ENCODE measurements at regions of chr7 and their contacts with region 1.

Region 1: GRCh38 chr7:3897438-3898385 is 596.7 kb downstream of the SDK1 start:
- DNase-seq: no peak
- ATAC-seq: peak in 1 of 2 donors; percentile 43
- H3K4me3 ChIP-seq: no peak overlapping the region
- H3K27ac ChIP-seq: no peak overlapping the region
- H3K4me1 ChIP-seq: no peaks in the 10 kb centered on the region
- H3K27me3 ChIP-seq: no peaks in the 10 kb centered on the region

Region 2: DNA sequence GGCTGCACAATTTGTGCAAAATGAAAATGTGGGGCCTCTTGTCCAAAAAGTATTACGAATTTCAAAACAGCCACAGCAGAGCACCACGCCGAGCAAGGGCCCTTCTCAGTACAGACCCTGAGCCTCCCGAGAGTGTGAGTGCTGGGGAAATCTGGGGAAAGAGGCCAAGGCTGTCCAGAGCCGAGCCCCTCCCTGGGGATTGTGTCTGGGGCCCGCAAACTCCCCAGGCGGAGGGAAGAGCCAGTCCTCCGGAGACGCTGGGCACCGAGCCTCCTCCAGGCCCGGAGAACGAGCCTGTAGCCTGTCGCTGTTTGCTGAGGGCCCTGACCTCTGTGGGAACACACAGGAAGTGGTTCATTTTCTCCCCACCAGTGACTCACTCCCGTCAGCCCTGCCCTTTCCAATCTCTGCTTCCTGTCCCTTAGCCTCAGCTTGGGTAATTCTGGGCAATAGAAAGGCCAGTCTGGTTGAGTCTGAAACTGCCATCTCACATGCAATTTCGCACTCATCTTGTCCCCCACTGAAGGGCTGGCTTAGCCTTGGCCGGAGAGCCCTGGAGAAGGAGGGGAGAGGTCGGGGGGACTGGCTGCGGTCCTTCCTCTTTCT is 1034.1 kb before region 1 on chr7:
- intact Hi-C with region 1: loop called in 1 of 4 experiments (anchors 10 kb)
- DNase-seq: peak; percentile 91 to 93 (median 92)
- ATAC-seq: peak; percentile 95 to 97
- H3K4me3 ChIP-seq: no peak overlapping the region
- H3K27ac ChIP-seq: peak overlapping the region; percentile 91
- H3K4me1 ChIP-seq: peaks cover 4% of the 10 kb centered on the region
- H3K27me3 ChIP-seq: no peaks in the 10 kb centered on the region

Region 3: GRCh38 chr7:2870471-2870931 is 1027.2 kb before region 1 on chr7:
- intact Hi-C with region 1: loop called in 2 of 4 experiments (anchors 10 kb)
- DNase-seq: peak; percentile 86 to 90 (median 89)
- ATAC-seq: peak; percentile 90 to 96
- H3K4me3 ChIP-seq: no peak overlapping the region
- H3K27ac ChIP-seq: no peak overlapping the region
- H3K4me1 ChIP-seq: no peaks in the 10 kb centered on the region
- H3K27me3 ChIP-seq: no peaks in the 10 kb centered on the region

Region 4: DNA sequence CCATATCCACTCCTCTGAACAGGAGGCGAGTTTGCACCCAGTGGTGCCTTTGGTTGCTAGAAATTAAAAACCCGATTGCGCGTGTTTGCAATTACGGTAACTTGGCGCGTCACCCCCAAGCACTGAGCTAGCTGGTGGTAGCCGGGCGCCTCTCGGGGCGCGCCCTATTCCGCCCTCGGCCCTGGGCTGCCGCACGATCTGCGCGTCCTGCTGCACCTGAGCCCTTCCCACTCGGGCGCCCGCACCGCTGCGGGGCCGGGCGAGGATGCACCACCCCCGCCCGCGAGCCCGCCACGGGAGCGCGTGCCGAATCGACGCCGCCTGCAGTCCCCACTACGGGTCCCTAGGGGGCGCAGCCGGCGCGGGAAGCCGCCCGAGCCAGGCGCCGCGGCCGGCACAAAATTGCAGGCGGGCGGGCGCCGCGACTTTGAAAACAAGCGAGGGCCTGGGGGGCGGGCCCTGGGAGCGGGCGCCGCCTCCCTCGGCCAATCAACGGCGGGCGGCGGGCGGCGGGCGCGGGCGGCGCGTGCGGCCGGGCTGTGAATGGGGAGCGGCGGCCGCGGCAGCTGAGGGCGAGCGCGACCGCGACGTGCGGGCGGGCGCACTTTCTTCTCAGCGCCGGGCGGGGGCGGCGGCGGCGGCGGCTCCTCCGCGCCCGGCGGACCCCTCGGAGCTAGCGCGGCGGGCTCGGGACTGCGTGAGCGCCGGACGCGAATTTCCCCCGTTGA is 596.9 kb before region 1 on chr7 and contains the start of gene SDK1:
- intact Hi-C with region 1: loop called in 2 of 4 experiments (anchors 10 kb)
- DNase-seq: peak; percentile 94 to 98 (median 98)
- ATAC-seq: peak; percentile 98
- H3K4me3 ChIP-seq: peak within 1 kb of the TSS; percentile 74
- H3K27ac ChIP-seq: no peak within 1 kb of the TSS
- H3K4me1 ChIP-seq: no peaks in the 10 kb centered on the region
- H3K27me3 ChIP-seq: no peaks in the 10 kb centered on the region
- total RNA-seq, gene SDK1: 0.97 to 3.2 (median 2.4) TPM

Region 5: DNA sequence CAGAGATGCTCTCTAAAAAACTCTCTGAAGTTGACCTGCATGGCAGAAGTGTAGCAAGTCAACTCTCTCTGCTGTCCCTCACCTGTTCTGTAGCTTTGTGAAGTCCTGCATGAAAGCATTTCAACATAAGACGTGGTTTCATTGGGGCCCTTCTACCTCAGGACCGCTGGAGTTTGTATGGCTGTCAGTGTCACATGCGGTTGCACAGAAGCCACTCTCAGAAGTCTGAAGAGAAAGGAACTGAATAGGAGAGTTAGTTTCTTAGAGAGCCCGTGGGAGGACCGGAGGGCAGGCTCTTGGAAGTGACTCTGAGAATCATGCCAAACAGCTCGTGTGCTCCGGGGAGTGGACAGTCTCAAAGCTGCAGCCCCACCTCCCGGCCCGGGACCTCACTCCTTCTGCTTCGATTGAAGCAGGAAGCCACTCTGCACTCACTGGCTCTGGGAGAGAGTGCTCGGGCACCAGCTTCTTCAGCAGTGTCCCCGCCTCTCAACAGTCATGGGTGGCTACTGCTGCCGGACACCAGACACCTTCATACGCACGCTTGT is 109.9 kb before region 1 on chr7:
- intact Hi-C with region 1: no loop called
- DNase-seq: peak; percentile 18 to 56 (median 25)
- ATAC-seq: peak; percentile 48 to 69
- H3K4me3 ChIP-seq: no peak overlapping the region
- H3K27ac ChIP-seq: no peak overlapping the region
- H3K4me1 ChIP-seq: no peaks in the 10 kb centered on the region
- H3K27me3 ChIP-seq: no peaks in the 10 kb centered on the region

Region 6: DNA sequence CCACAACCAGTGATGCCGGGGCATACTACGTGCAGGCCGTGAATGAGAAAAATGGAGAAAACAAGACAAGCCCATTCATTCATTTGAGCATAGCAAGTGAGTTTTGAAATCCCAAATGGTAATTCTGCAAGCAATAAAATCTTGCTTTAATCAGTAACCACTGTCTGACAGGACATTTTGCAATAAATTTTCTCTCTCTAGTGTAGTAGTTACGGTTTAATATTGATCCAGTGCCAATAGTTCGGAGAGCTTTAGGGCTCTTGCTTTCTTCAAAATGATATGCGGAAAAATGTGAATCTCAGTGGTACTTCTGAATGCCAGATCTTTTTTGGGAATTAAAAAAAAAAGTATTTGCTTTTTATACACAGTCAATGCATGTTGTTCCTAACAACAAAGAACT is 76.2 kb before region 1 on chr7:
- intact Hi-C with region 1: no loop called
- DNase-seq: no peak
- ATAC-seq: no peak
- H3K4me3 ChIP-seq: no peak overlapping the region
- H3K27ac ChIP-seq: no peak overlapping the region
- H3K4me1 ChIP-seq: no peaks in the 10 kb centered on the region
- H3K27me3 ChIP-seq: no peaks in the 10 kb centered on the region

Region 7: GRCh38 chr7:4245236-4246137 is 347.8 kb after region 1 on chr7:
- intact Hi-C with region 1: no loop called
- DNase-seq: no peak
- ATAC-seq: no peak
- H3K4me3 ChIP-seq: no peak overlapping the region
- H3K27ac ChIP-seq: no peak overlapping the region
- H3K4me1 ChIP-seq: no peaks in the 10 kb centered on the region
- H3K27me3 ChIP-seq: no peaks in the 10 kb centered on the region

Measured in right cardiac atrium (tissue), 5 donors.